Activated CD8-positive, alpha-beta T cell treated with anti-CD3 and anti-CD28 coated beads, Interleukin-2, amount 10 ng/mL, durations not matched to agents 7 days and 5 days (primary cell): ENCODE measurements at regions of chr2 and their contacts with region 1.

Region 1: GRCh38 chr2:69565431-69565839 is 78.1 kb downstream of the AAK1 start:
- DNase-seq: peak; percentile 80
- ATAC-seq: peak; percentile 89
- H3K4me3 Mint-ChIP-seq: no peak overlapping the region
- H3K27ac Mint-ChIP-seq: peak overlapping the region; percentile 6
- H3K4me1 Mint-ChIP-seq: peaks cover 55% of the 10 kb centered on the region
- H3K27me3 Mint-ChIP-seq: no peaks in the 10 kb centered on the region

Region 2: GRCh38 chr2:69535817-69536241 is 29.6 kb before region 1 on chr2:
- CTCF ChIA-PET with region 1: interaction called, 14 read pairs
- POLR2A ChIA-PET with region 1: no interaction called
- DNase-seq: no peak
- ATAC-seq: no peak
- H3K4me3 Mint-ChIP-seq: no peak overlapping the region
- H3K27ac Mint-ChIP-seq: peak overlapping the region; percentile 8
- H3K4me1 Mint-ChIP-seq: peaks cover 20% of the 10 kb centered on the region
- H3K27me3 Mint-ChIP-seq: no peaks in the 10 kb centered on the region

Region 3: GRCh38 chr2:69594341-69594740 is 28.9 kb after region 1 on chr2:
- CTCF ChIA-PET with region 1: interaction called, 219 read pairs
- POLR2A ChIA-PET with region 1: interaction called, 3 read pairs
- DNase-seq: no peak
- ATAC-seq: no peak
- H3K4me3 Mint-ChIP-seq: no peak overlapping the region
- H3K27ac Mint-ChIP-seq: no peak overlapping the region
- H3K4me1 Mint-ChIP-seq: peaks cover 72% of the 10 kb centered on the region
- H3K27me3 Mint-ChIP-seq: no peaks in the 10 kb centered on the region

Region 4: GRCh38 chr2:69628325-69629021 is 63.0 kb after region 1 on chr2:
- CTCF ChIA-PET with region 1: interaction called, 22 read pairs
- POLR2A ChIA-PET with region 1: no interaction called
- DNase-seq: no peak
- ATAC-seq: peak; percentile 55
- H3K4me3 Mint-ChIP-seq: no peak overlapping the region
- H3K27ac Mint-ChIP-seq: no peak overlapping the region
- H3K4me1 Mint-ChIP-seq: peaks cover 26% of the 10 kb centered on the region
- H3K27me3 Mint-ChIP-seq: no peaks in the 10 kb centered on the region

Region 5: DNA sequence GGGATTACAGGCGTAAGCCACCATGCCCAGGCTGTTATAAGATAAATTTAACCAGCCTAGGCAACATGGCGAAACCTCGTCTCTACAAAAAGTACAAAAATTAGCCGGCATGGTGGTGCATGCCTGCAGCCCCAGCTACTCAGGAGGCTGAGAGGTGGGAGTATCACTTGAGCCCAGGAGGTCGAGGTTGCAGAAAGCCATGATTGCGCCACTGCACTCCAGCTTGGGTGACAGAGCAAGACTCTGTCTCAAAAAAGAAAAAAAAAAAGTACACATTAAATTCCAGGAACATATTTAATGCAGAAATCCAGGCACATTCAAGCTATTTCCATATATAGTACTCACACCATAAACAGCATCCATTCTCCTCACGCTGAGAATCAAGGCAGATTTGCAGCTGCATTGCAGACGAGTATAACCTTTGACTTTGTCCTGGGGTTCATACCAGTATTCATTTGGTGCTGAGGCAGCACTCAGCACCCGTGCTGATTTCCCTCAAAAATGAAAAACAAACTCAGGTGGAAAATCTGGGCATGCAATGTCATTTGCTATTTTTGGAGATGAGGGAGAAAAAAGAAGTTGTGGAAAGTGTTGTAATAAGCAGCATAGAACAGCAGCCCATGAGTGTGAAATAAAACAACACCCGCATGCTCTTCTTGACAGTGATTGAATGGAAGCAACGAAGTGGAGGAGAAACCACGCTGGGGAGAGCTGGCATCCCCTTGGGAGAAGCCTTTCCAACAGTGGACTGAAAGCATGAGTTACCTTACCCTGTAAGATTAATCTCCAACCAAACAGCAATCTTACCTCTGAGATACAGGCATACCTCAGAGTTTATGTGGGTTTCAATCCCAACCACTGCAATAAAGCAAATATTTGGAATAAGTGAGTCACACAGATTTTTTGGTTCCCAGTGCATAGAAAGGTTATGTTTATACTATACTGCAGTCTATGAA is 129.7 kb after region 1 on chr2:
- CTCF ChIA-PET with region 1: interaction called, 19 read pairs
- POLR2A ChIA-PET with region 1: no interaction called
- DNase-seq: no peak
- ATAC-seq: no peak
- H3K4me3 Mint-ChIP-seq: no peak overlapping the region
- H3K27ac Mint-ChIP-seq: no peak overlapping the region
- H3K4me1 Mint-ChIP-seq: peaks cover 71% of the 10 kb centered on the region
- H3K27me3 Mint-ChIP-seq: no peaks in the 10 kb centered on the region

Region 6: GRCh38 chr2:69816923-69817542 is 251.6 kb after region 1 on chr2:
- CTCF ChIA-PET with region 1: interaction called, 11 read pairs
- POLR2A ChIA-PET with region 1: no interaction called
- DNase-seq: peak; percentile 87
- ATAC-seq: peak; percentile 75
- H3K4me3 Mint-ChIP-seq: no peak overlapping the region
- H3K27ac Mint-ChIP-seq: no peak overlapping the region
- H3K4me1 Mint-ChIP-seq: peaks cover 11% of the 10 kb centered on the region
- H3K27me3 Mint-ChIP-seq: no peaks in the 10 kb centered on the region